Activated naive CD4-positive, alpha-beta T cell treated with anti-CD3 and anti-CD28 coated beads for 36 hours (primary cell): ENCODE measurements at regions of chr14 and their contacts with region 1.

Region 1: DNA sequence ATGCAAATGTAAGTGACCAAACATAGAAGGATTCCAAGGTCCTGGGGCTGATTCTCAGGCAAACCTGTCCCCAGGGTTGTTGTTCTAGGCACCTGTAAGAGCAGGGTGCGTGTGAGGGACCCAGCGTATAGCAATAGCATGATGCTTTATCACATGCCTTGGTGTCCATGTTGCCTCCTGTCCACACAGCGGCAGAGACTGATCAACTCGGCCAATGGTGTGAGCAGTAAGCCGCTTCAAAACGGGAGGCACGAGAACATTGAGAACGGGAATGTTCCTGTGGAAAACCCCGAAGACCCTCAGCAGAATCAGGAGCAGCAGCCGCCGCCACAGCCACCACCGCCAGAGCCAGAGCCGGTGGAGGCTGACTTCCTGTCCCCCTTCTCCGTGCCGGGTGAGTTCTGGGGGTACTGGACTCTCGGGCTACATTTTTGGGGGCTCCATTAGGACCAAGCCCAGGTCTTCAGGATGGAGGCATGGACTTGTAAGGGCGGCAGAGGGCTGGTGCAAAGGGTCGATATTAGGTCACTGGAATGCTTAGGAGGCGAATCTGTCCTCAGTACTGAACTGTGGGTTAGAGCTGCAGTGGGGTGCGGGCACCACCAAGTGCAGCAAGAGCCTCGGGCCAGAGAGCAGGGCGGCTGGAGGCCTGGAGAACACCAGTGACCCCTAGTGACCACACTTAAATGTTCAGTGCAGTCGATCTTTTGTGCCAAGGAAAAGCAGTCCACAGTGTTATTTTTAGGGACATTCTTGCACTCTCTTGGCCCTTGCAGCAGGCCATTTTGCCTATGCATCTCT is 57.2 kb upstream of the RIN3 start:
- DNase-seq: peak; percentile 20
- H3K4me3 Mint-ChIP-seq: no peak overlapping the region
- H3K27ac Mint-ChIP-seq: no peak overlapping the region
- H3K4me1 Mint-ChIP-seq: peaks cover 8% of the 10 kb centered on the region
- H3K27me3 Mint-ChIP-seq: no peaks in the 10 kb centered on the region

Region 2: DNA sequence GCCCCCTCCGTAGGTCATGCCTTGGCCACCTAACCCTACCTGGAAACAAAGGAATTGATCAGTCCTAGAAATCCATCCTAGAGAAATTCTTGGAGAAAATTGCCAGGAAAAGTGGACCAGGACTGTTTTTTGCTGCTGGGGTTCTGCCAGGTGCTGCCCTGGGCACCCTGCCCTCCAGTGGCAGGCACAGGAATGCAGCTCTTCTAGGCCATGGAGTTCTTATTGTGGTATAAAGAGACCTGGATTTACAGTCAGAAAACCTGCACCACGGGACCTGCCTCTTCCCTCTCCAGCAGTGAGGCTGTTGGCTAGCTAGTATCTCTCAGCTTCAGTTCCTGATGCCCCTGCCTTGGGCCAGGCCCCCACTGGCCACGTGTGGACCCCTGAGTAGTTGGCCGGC is 73.7 kb before region 1 on chr14:
- CTCF ChIA-PET with region 1: no interaction called
- intact Hi-C with region 1: no loop called
- DNase-seq: no peak
- H3K4me3 Mint-ChIP-seq: no peak overlapping the region
- H3K27ac Mint-ChIP-seq: no peak overlapping the region
- H3K4me1 Mint-ChIP-seq: no peaks in the 10 kb centered on the region
- H3K27me3 Mint-ChIP-seq: no peaks in the 10 kb centered on the region

Region 3: GRCh38 chr14:92603309-92604242 is 147.2 kb after region 1 on chr14:
- CTCF ChIA-PET with region 1: no interaction called
- intact Hi-C with region 1: loop called (anchors 5 kb)
- DNase-seq: peak; percentile 71
- H3K4me3 Mint-ChIP-seq: no peak overlapping the region
- H3K27ac Mint-ChIP-seq: no peak overlapping the region
- H3K4me1 Mint-ChIP-seq: peaks cover 20% of the 10 kb centered on the region
- H3K27me3 Mint-ChIP-seq: no peaks in the 10 kb centered on the region